ENCODE measurements at regions of chr13 and their contacts with region 1.

Region 1: DNA sequence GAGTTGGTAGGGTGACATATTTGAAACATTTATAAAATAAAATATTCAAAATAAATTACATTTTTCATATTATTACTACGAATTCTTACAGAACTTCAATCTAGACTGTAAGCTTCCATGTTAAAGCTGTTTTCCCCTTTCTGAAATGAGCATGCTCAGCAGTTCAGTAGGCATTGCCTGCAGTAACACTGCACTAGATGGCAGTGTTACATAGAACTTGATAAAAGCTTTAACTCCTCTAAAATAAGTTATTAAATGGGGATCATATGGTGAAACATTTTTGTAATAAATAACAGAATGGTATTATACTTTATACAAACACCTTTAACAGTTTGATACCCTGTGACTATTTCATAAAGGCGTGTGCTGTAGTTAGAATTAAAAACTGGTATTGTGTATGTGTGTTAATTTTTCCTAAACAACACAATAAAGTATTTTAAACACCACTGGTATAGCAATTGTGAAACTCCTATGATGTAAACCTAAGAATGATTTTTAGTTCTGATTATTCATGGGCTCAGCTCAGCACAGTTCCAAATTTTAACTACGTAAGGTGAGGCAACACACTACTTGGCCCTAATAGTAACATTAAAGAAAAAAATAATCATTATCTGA is 11.6 kb upstream of the GPR18 start:
- DNase-seq: peak in 7 of 9 donors; percentile 51 to 71 (median 58)
- ATAC-seq: peak; percentile 84
- H3K4me3 ChIP-seq: no peak overlapping the region
- H3K4me3 Mint-ChIP-seq: peak overlapping the region in 1 of 10 donors; percentile 52
- H3K27ac ChIP-seq: peak overlapping the region; percentile 46
- H3K27ac Mint-ChIP-seq: peak overlapping the region in 8 of 9 donors; percentile 63 to 94 (median 92)
- H3K4me1 ChIP-seq: peaks cover 38 to 54% of the 10 kb centered on the region in 2 donors
- H3K4me1 Mint-ChIP-seq: peaks cover 35 to 73% (median 65%) of the 10 kb centered on the region in 7 donors
- H3K27me3 ChIP-seq: no peaks in the 10 kb centered on the region
- H3K27me3 Mint-ChIP-seq: no peaks in the 10 kb centered on the region

Region 2: DNA sequence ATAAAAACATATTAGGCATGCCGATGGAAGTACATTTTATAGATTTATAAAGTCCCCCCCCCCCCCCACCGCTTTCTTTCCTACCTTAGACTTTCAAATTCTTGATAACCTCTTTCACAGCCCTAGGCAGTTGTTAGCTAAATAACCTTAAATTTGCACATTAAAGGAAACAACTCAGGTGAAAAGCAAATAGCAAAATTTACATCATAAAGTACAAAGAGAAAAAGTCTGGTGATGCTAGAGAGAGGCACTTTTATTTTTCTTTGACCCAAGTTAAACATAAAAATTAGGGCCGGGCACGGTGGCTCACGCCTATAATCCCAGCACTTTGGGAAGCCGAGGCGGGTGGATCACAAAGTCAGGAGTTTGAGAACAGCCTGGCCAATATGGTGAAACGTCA is 84.1 kb before region 1 on chr13:
- CTCF ChIA-PET with region 1: interaction called, 232 read pairs
- POLR2A ChIA-PET with region 1: interaction called, 4 read pairs
- intact Hi-C with region 1: no loop called
- DNase-seq: no peak
- ATAC-seq: no peak
- H3K4me3 ChIP-seq: no peak overlapping the region
- H3K4me3 Mint-ChIP-seq: no peak overlapping the region
- H3K27ac ChIP-seq: no peak overlapping the region
- H3K27ac Mint-ChIP-seq: no peak overlapping the region
- H3K4me1 ChIP-seq: no peaks in the 10 kb centered on the region
- H3K4me1 Mint-ChIP-seq: peaks cover 0 to 5% (median 4%) of the 10 kb centered on the region in 7 donors
- H3K27me3 ChIP-seq: no peaks in the 10 kb centered on the region
- H3K27me3 Mint-ChIP-seq: peaks cover 0 to 3% (median 0%) of the 10 kb centered on the region in 5 donors

Region 3: DNA sequence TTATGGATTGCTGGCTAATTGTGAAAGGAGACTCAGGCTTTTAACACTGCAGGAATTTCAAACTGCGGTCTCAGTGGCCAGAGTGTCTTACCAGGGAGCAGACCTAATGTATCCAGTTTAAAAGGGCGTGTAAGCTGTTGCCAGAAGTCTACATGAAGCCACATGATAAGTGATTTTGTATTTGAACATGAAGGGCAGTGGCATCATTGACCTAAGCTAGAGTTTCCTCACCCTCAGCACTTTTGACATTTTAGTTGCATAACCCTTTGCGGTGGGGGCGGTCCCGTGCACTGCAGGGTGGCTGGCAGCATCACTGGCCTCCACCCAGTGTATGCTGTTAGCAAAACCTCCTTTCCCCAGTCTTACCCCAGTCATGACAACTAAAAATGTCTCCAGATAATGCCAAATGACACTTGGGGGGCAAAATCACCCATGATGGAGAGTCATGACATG is 12.1 kb after region 1 on chr13:
- CTCF ChIA-PET with region 1: interaction called, 16 read pairs
- POLR2A ChIA-PET with region 1: interaction called, 11 read pairs
- intact Hi-C with region 1: loop called in 1 of 2 experiments (anchors 1 kb)
- DNase-seq: peak in 7 of 9 donors; percentile 45 to 65 (median 55)
- ATAC-seq: peak; percentile 85
- H3K4me3 ChIP-seq: peak overlapping the region; percentile 10
- H3K4me3 Mint-ChIP-seq: peak overlapping the region; percentile 36 to 85 (median 72)
- H3K27ac ChIP-seq: peak overlapping the region; percentile 73
- H3K27ac Mint-ChIP-seq: peak overlapping the region; percentile 86 to 99 (median 97)
- H3K4me1 ChIP-seq: peaks cover 83 to 87% of the 10 kb centered on the region in 2 donors
- H3K4me1 Mint-ChIP-seq: peaks cover 64 to 99% (median 94%) of the 10 kb centered on the region in 7 donors
- H3K27me3 ChIP-seq: no peaks in the 10 kb centered on the region
- H3K27me3 Mint-ChIP-seq: no peaks in the 10 kb centered on the region

Region 4: GRCh38 chr13:99347911-99348451 is 78.2 kb after region 1 on chr13:
- CTCF ChIA-PET with region 1: interaction called, 26 read pairs
- POLR2A ChIA-PET with region 1: interaction called, 33 read pairs
- intact Hi-C with region 1: loop called in 1 of 2 experiments (anchors 1 kb)
- DNase-seq: no peak
- ATAC-seq: no peak
- H3K4me3 ChIP-seq: no peak overlapping the region
- H3K4me3 Mint-ChIP-seq: peak overlapping the region in 2 of 10 donors; percentile 17 to 48
- H3K27ac ChIP-seq: peak overlapping the region; percentile 41
- H3K27ac Mint-ChIP-seq: peak overlapping the region; percentile 30 to 99 (median 96)
- H3K4me1 ChIP-seq: peaks cover 30 to 36% of the 10 kb centered on the region in 2 donors
- H3K4me1 Mint-ChIP-seq: peaks cover 42 to 98% (median 89%) of the 10 kb centered on the region in 7 donors
- H3K27me3 ChIP-seq: no peaks in the 10 kb centered on the region
- H3K27me3 Mint-ChIP-seq: no peaks in the 10 kb centered on the region

Region 5: GRCh38 chr13:99386911-99387788 is 117.4 kb after region 1 on chr13:
- CTCF ChIA-PET with region 1: interaction called, 78 read pairs
- POLR2A ChIA-PET with region 1: interaction called, 44 read pairs
- intact Hi-C with region 1: loop called (anchors 1 kb)
- DNase-seq: peak; percentile 74 to 89 (median 84)
- ATAC-seq: peak; percentile 65
- H3K4me3 ChIP-seq: no peak overlapping the region
- H3K4me3 Mint-ChIP-seq: peak overlapping the region in 9 of 10 donors; percentile 2 to 73 (median 62)
- H3K27ac ChIP-seq: peak overlapping the region; percentile 85
- H3K27ac Mint-ChIP-seq: peak overlapping the region; percentile 44 to 99 (median 98)
- H3K4me1 ChIP-seq: peaks cover 59 to 65% of the 10 kb centered on the region in 2 donors
- H3K4me1 Mint-ChIP-seq: peaks cover 35 to 83% (median 76%) of the 10 kb centered on the region in 7 donors
- H3K27me3 ChIP-seq: no peaks in the 10 kb centered on the region
- H3K27me3 Mint-ChIP-seq: no peaks in the 10 kb centered on the region

Region 6: GRCh38 chr13:100088644-100089464 is 819.1 kb after region 1 on chr13 and contains the start of gene PCCA:
- CTCF ChIA-PET with region 1: no interaction called
- POLR2A ChIA-PET with region 1: no interaction called
- intact Hi-C with region 1: loop called in 1 of 2 experiments (anchors 10 kb)
- DNase-seq: peak; percentile 43 to 86 (median 51)
- ATAC-seq: peak; percentile 87
- H3K4me3 ChIP-seq: peak within 1 kb of the TSS; percentile 77
- H3K4me3 Mint-ChIP-seq: peak within 1 kb of the TSS; percentile 90 to 99 (median 95)
- H3K27ac ChIP-seq: peak within 1 kb of the TSS; percentile 58
- H3K27ac Mint-ChIP-seq: peak within 1 kb of the TSS; percentile 44 to 96 (median 79)
- H3K4me1 ChIP-seq: peaks cover 0 to 19% of the 10 kb centered on the region in 2 donors
- H3K4me1 Mint-ChIP-seq: peaks cover 22 to 41% (median 27%) of the 10 kb centered on the region in 7 donors
- H3K27me3 ChIP-seq: no peaks in the 10 kb centered on the region
- H3K27me3 Mint-ChIP-seq: peaks cover 0 to 5% (median 0%) of the 10 kb centered on the region in 5 donors
- total RNA-seq, gene PCCA: 8.3 to 14.6 (median 12.0) TPM